Cardiac septum (tissue), 1 donor: ENCODE measurements at regions of chr10 and their contacts with region 1.

Region 1: DNA sequence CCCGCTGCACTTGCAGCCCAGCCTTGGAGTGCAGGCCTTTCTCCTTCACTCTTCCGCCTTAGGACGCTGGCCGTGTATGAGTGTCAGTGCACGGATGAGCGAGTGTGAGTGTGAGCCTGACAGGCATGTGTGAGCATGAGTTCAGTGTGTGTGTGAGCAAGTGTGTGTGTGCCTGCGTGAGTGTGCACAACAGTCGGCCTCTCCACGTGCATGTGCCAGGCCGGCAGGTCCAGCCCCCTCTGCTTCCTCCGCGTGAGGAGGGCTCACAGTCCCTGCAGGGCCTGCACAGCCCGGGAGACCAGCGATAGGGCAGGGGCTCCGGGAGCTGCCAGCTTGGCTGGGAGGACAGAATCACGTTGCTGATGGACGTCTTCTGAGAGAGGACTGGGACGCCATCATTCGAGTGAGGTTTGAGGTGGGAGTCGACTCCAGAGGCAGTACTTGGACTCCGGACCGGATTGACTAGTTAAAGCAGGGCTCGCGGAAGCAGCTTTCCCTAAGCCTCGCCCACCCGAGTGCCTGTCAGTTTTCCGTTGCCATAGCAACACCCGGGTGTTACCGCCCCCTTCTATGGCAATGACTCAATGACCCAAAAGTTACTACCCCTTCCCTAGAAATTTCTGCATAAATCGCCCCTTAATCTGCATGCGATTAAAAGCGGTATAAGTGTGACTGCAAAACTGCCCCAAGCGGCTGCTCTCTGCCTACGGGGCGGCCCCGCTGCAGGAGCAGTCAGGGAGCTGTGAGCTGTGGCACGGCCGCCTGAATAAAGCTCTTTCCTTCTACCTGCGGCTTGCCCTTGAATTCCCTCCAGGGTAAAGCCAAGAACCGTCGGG is 19.6 kb upstream of the CFAP46 start:
- DNase-seq: peak; percentile 78

Region 2: GRCh38 chr10:133009222-133009954 is 47.4 kb after region 1 on chr10:
- intact Hi-C with region 1: loop called (anchors 2 kb)
- DNase-seq: peak; percentile 88